ENCODE measurements at regions of chr5 and their contacts with region 1.

Region 1: GRCh38 chr5:180802325-180803180 is at the start of gene MGAT1:
- DNase-seq: peak; percentile 47 to 91 (median 59)
- ATAC-seq: peak; percentile 80
- H3K4me3 ChIP-seq: peak within 1 kb of the TSS; percentile 77
- H3K4me3 Mint-ChIP-seq: peak within 1 kb of the TSS; percentile 89 to 99 (median 96)
- H3K27ac ChIP-seq: peak within 1 kb of the TSS; percentile 96
- H3K27ac Mint-ChIP-seq: peak within 1 kb of the TSS; percentile 91 to 100 (median 98)
- H3K4me1 ChIP-seq: peaks cover 75 to 84% of the 10 kb centered on the region in 2 donors
- H3K4me1 Mint-ChIP-seq: peaks cover 76 to 83% (median 79%) of the 10 kb centered on the region in 7 donors
- H3K27me3 ChIP-seq: no peaks in the 10 kb centered on the region
- H3K27me3 Mint-ChIP-seq: no peaks in the 10 kb centered on the region
- total RNA-seq, gene MGAT1: 101 to 206 (median 196) TPM

Region 2: DNA sequence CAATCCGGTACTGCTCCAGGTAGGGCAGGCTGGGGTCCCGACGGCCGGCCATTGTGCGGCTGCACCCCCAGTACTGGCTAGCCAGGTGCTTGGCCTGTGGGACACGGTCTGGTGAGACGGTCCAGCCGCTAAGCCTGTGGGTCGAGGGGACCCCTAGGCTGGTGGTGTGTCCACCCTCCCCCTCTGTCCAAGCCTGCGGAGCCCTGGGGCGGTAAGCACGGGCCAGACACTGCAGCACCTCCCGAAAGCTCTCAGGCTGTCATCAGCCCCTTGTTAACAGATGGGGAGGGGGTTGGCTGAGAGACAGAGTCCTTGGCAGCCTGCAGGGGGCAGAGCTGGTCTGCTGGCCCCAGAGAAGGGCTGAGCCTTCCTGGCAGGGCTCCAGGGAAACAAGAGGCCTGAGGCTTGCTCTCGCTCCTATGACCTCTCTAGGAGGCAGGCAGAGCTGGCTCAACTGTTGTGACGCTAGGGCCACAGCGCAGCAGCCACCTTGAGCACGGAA is 932.1 kb before region 1 on chr5:
- CTCF ChIA-PET with region 1: no interaction called
- POLR2A ChIA-PET with region 1: no interaction called
- intact Hi-C with region 1: no loop called
- DNase-seq: no peak
- ATAC-seq: peak; percentile 29
- H3K4me3 ChIP-seq: no peak overlapping the region
- H3K4me3 Mint-ChIP-seq: no peak overlapping the region
- H3K27ac ChIP-seq: no peak overlapping the region
- H3K27ac Mint-ChIP-seq: no peak overlapping the region
- H3K4me1 ChIP-seq: no peaks in the 10 kb centered on the region
- H3K4me1 Mint-ChIP-seq: peaks cover 0 to 2% (median 0%) of the 10 kb centered on the region in 7 donors
- H3K27me3 ChIP-seq: no peaks in the 10 kb centered on the region
- H3K27me3 Mint-ChIP-seq: no peaks in the 10 kb centered on the region

Region 3: GRCh38 chr5:180494060-180494509 is 308.5 kb before region 1 on chr5 and contains the start of gene CNOT6:
- CTCF ChIA-PET with region 1: no interaction called
- POLR2A ChIA-PET with region 1: interaction called, 3 read pairs
- intact Hi-C with region 1: loop called in 1 of 2 experiments (anchors 2 kb)
- DNase-seq: peak; percentile 91 to 98 (median 95)
- ATAC-seq: peak; percentile 98
- H3K4me3 ChIP-seq: peak within 1 kb of the TSS; percentile 83
- H3K4me3 Mint-ChIP-seq: peak within 1 kb of the TSS; percentile 85 to 99 (median 96)
- H3K27ac ChIP-seq: peak within 1 kb of the TSS; percentile 98
- H3K27ac Mint-ChIP-seq: peak within 1 kb of the TSS; percentile 84 to 98 (median 95)
- H3K4me1 ChIP-seq: peaks cover 10 to 27% of the 10 kb centered on the region in 2 donors
- H3K4me1 Mint-ChIP-seq: peaks cover 29 to 42% (median 35%) of the 10 kb centered on the region in 7 donors
- H3K27me3 ChIP-seq: no peaks in the 10 kb centered on the region
- H3K27me3 Mint-ChIP-seq: no peaks in the 10 kb centered on the region
- total RNA-seq, gene CNOT6: 22.8 to 41.9 (median 30.0) TPM

Region 4: DNA sequence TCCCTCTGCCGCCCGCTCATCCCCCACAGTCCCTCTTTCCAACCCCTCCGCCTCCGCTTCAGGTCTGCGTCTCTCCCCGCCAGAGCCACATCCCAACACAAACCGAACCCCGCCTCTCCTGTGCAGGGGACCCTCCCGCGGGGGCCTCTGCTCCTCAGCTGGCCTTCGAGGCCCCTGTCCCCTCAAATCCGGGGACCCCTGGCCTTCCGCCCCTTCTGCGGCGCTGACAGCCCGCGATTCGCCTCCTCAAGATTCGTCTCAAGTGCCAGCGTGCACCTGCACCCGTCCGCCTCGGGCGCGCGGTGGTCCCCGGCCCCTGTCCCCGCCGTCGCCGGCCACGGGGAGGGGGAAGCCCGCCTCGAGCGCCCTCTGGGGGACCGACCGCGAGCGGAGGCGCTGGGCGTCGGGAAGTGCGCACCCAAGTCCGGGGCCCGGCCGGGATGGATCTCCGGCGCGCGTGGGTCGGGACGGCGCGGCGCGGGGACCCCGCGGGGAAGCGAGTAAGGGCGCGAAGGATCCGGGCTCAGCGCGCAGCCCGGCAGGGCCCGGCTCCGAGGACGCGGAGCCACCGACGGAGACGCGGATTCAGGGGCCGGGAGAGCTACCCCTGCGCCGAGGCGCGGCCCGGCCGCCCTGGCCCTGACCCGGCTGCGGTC is 153.8 kb before region 1 on chr5:
- CTCF ChIA-PET with region 1: no interaction called
- POLR2A ChIA-PET with region 1: no interaction called
- intact Hi-C with region 1: no loop called
- DNase-seq: peak in 1 of 9 donors; percentile 28
- ATAC-seq: peak; percentile 15
- H3K4me3 ChIP-seq: peak overlapping the region; percentile 20
- H3K4me3 Mint-ChIP-seq: peak overlapping the region; percentile 61 to 89 (median 78)
- H3K27ac ChIP-seq: no peak overlapping the region
- H3K27ac Mint-ChIP-seq: peak overlapping the region in 1 of 9 donors; percentile 47
- H3K4me1 ChIP-seq: no peaks in the 10 kb centered on the region
- H3K4me1 Mint-ChIP-seq: peaks cover 9 to 18% (median 12%) of the 10 kb centered on the region in 7 donors
- H3K27me3 ChIP-seq: peaks cover 0 to 4% of the 10 kb centered on the region in 2 donors
- H3K27me3 Mint-ChIP-seq: peaks cover 16 to 47% (median 31%) of the 10 kb centered on the region in 5 donors

Region 5: GRCh38 chr5:180739271-180739670 is 63.3 kb before region 1 on chr5:
- CTCF ChIA-PET with region 1: no interaction called
- POLR2A ChIA-PET with region 1: no interaction called
- intact Hi-C with region 1: no loop called
- DNase-seq: no peak
- ATAC-seq: no peak
- H3K4me3 ChIP-seq: no peak overlapping the region
- H3K4me3 Mint-ChIP-seq: no peak overlapping the region
- H3K27ac ChIP-seq: no peak overlapping the region
- H3K27ac Mint-ChIP-seq: no peak overlapping the region
- H3K4me1 ChIP-seq: no peaks in the 10 kb centered on the region
- H3K4me1 Mint-ChIP-seq: peaks cover 0 to 5% (median 0%) of the 10 kb centered on the region in 7 donors
- H3K27me3 ChIP-seq: no peaks in the 10 kb centered on the region
- H3K27me3 Mint-ChIP-seq: peaks cover 17 to 35% (median 25%) of the 10 kb centered on the region in 5 donors

Region 6: DNA sequence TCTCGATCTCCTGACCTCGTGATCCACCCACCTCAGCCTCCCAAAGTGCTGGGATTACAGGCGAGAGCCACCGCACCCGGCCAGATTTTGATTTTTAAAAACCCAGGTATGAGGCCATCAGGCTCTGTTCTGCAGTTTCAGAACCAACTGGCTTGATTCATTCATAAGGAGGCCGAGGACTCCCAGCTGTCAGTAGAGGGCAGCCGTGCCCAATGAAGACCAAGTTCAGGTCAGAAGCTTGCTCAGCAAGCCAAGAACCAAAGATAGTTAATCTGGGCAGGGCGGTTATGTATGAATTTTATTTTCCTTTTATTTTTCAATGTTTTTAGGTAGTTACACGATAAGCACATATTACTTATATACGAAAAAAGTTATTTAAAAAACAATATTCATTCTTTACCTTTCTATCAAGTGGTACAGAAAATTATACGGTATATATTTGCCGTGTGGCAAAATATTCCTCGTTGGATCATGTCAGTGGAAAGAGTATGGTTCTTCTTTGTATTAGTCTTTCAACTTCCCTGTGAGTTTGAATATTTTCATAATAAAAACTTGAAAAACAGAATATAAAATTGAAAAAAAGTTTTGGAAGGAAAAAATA is 18.0 kb before region 1 on chr5:
- CTCF ChIA-PET with region 1: interaction called, 4 read pairs
- POLR2A ChIA-PET with region 1: interaction called, 10 read pairs
- intact Hi-C with region 1: loop called (anchors 1 to 2 kb)
- DNase-seq: peak; percentile 45 to 78 (median 65)
- ATAC-seq: peak; percentile 87
- H3K4me3 ChIP-seq: no peak overlapping the region
- H3K4me3 Mint-ChIP-seq: no peak overlapping the region
- H3K27ac ChIP-seq: no peak overlapping the region
- H3K27ac Mint-ChIP-seq: peak overlapping the region in 6 of 9 donors; percentile 8 to 76 (median 33)
- H3K4me1 ChIP-seq: peaks cover 0 to 7% of the 10 kb centered on the region in 2 donors
- H3K4me1 Mint-ChIP-seq: peaks cover 23 to 58% (median 46%) of the 10 kb centered on the region in 7 donors
- H3K27me3 ChIP-seq: no peaks in the 10 kb centered on the region
- H3K27me3 Mint-ChIP-seq: no peaks in the 10 kb centered on the region

Region 7: DNA sequence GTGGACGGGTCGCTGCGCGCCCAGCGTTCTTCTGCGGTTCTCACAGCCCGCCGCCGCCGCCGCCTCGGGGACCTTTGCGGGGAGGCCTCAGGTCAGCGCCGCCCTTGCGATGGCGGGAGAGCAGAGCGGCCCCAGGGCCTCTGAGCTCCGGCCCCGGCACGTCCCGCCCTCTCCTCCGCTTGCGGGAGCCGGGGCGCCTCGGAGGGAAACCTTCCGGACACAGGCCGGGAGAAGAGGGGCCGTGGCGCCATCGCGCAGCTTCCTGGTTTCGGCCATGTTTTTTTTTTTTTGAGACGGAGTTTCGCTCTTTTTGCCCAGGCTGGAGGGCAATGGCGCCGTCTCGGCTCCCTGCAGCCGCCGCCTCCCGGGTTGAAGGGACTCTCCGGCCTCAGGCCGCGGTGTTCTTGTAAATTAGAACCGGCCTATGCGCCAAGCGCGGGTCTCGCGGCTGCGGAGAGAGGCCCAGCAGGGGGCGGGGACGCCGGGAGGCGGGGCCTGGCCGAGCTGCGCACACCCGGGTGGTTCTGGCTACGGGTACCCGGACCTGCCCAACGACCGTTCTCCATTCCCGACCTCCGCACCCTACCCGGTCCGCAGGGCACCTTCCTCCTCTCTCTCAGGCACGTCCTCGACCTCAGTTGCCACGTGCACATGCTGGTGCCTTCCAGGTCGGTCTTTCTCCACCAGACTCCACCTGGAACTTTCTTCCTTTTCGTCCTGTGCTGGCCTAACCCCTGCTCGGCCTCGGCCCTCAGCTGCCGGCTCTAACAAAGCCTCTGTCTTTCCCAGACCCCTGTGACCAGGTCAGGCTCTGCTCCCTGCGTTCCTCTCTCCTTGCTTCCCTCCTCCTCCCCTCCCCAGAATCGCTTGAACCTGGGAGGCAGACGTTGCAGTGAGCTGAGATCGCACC is 28.8 kb after region 1 on chr5:
- CTCF ChIA-PET with region 1: interaction called, 6 read pairs
- POLR2A ChIA-PET with region 1: interaction called, 273 read pairs
- intact Hi-C with region 1: loop called (anchors 1 kb)
- DNase-seq: peak; percentile 60 to 85 (median 70)
- ATAC-seq: peak; percentile 76
- H3K4me3 ChIP-seq: peak overlapping the region; percentile 62
- H3K4me3 Mint-ChIP-seq: peak overlapping the region; percentile 97 to 100 (median 98)
- H3K27ac ChIP-seq: peak overlapping the region; percentile 95
- H3K27ac Mint-ChIP-seq: peak overlapping the region; percentile 96 to 100 (median 98)
- H3K4me1 ChIP-seq: peaks cover 29 to 32% of the 10 kb centered on the region in 2 donors
- H3K4me1 Mint-ChIP-seq: peaks cover 35 to 67% (median 58%) of the 10 kb centered on the region in 7 donors
- H3K27me3 ChIP-seq: no peaks in the 10 kb centered on the region
- H3K27me3 Mint-ChIP-seq: no peaks in the 10 kb centered on the region

Measured in naive thymus-derived CD4-positive, alpha-beta T cell (primary cell).